IMR-90 (cell line): ENCODE measurements at regions of chr20 and their contacts with region 1.

Region 1: DNA sequence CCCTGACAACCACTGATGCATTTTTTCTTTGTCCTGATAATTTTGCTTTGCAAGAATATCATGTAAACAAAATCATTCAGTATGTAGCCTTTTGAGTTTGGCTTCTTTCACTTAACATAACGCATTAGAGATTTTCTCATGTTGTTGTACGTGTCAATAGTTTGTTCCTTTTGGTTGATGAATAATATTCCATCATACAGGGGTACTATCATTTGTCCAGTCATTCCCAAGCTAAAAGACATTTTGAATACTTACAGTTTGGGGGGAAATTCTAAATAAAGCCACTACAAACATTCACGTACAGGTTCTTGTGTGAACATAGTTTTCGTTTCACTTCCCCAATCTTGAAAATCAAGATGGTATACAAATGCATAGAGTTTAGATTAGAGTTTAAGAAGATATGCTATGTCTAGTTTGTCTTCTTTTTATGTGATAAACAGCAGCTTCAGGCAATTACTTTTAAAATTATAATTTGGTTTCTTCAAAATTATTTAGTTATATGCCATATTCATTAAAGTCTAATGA is 5.2 kb downstream of the HAO1 start:
- DNase-seq: no peak
- ATAC-seq: no peak
- H3K4me3 ChIP-seq: no peak overlapping the region
- H3K27ac ChIP-seq: no peak overlapping the region
- H3K4me1 ChIP-seq: no peaks in the 10 kb centered on the region
- H3K27me3 ChIP-seq: peaks cover 9% of the 10 kb centered on the region
- CTCF ChIP-seq: no peak
- POLR2A ChIP-seq: no peak
- RAD21 ChIP-seq: no peak

Region 2: DNA sequence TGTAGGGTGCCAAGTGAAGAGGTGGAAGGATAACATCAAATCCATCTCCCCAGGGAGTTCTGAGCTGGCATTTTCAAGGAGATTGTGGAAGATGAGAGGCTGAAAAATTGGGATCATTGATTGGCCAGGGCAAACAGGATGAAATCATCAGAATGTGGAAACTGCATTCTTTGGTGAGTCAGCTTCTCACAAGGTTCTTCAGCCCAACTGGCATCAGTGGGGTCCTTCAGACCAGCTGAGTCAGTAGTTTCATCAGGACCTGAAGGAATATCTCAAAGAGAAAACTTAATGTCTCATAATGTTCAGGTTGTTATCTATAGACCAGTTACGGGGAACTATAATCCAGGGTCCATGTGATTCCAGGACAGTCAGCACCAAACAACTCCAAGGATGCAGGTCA is 190.7 kb before region 1 on chr20:
- CTCF ChIA-PET with region 1: no interaction called
- POLR2A ChIA-PET with region 1: no interaction called
- dilution Hi-C with region 1: no loop called
- in situ Hi-C with region 1: no loop called
- intact Hi-C with region 1: no loop called
- DNase-seq: peak; percentile 62
- ATAC-seq: peak; percentile 63
- H3K4me3 ChIP-seq: no peak overlapping the region
- H3K27ac ChIP-seq: no peak overlapping the region
- H3K4me1 ChIP-seq: peaks cover 3% of the 10 kb centered on the region; the same call in 1 of the 2 replicates
- H3K27me3 ChIP-seq: no peaks in the 10 kb centered on the region
- CTCF ChIP-seq: no peak
- POLR2A ChIP-seq: no peak
- RAD21 ChIP-seq: no peak

Region 3: GRCh38 chr20:7893014-7893707 is 41.9 kb before region 1 on chr20:
- CTCF ChIA-PET with region 1: no interaction called
- POLR2A ChIA-PET with region 1: no interaction called
- dilution Hi-C with region 1: no loop called
- in situ Hi-C with region 1: no loop called
- intact Hi-C with region 1: no loop called
- DNase-seq: no peak
- ATAC-seq: no peak
- H3K4me3 ChIP-seq: no peak overlapping the region
- H3K27ac ChIP-seq: no peak overlapping the region
- H3K4me1 ChIP-seq: no peaks in the 10 kb centered on the region
- H3K27me3 ChIP-seq: no peaks in the 10 kb centered on the region
- CTCF ChIP-seq: no peak
- POLR2A ChIP-seq: no peak
- RAD21 ChIP-seq: no peak

Region 4: DNA sequence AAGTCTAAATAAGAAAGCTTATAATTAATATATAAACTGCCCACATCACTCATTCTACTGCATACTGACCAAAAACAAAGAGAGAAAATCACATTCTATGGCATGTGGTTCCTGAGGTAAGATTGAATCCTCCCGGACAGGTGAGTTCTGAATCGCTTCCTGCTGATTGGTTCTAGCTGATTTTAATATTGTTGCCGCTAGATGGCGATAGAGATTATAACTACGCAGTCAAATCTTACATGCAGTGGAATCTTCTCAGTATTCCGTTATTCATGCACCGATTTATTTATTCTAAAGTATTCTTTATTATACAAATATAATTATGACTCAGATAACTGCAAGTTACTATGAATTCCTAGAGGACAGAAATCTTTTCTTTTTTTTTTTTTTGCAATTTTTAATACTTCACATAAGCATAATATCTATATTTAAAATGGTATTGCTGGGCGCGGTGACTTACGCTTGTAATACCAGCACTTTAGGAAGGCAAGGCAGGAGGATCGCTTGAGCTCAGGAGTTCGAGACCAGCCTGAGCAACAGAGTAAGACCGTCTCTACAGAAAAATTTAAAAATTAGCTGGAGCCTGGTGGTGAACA is 108.7 kb after region 1 on chr20:
- CTCF ChIA-PET with region 1: interaction called, 11 read pairs
- POLR2A ChIA-PET with region 1: no interaction called
- dilution Hi-C with region 1: no loop called
- in situ Hi-C with region 1: no loop called
- intact Hi-C with region 1: loop called (anchors 5 kb)
- DNase-seq: peak; percentile 68
- ATAC-seq: peak; percentile 62
- H3K4me3 ChIP-seq: no peak overlapping the region
- H3K27ac ChIP-seq: no peak overlapping the region
- H3K4me1 ChIP-seq: no peaks in the 10 kb centered on the region
- H3K27me3 ChIP-seq: peaks cover 7% of the 10 kb centered on the region
- CTCF ChIP-seq: peak; percentile 71
- POLR2A ChIP-seq: no peak
- RAD21 ChIP-seq: peak; percentile 73

Region 5: GRCh38 chr20:8175741-8176675 is 240.9 kb after region 1 on chr20:
- CTCF ChIA-PET with region 1: no interaction called
- POLR2A ChIA-PET with region 1: no interaction called
- dilution Hi-C with region 1: no loop called
- in situ Hi-C with region 1: no loop called
- intact Hi-C with region 1: no loop called
- DNase-seq: no peak
- ATAC-seq: no peak
- H3K4me3 ChIP-seq: no peak overlapping the region
- H3K27ac ChIP-seq: no peak overlapping the region
- H3K4me1 ChIP-seq: no peaks in the 10 kb centered on the region
- H3K27me3 ChIP-seq: no peaks in the 10 kb centered on the region
- CTCF ChIP-seq: no peak
- POLR2A ChIP-seq: no peak
- RAD21 ChIP-seq: no peak